Activated CD4-positive, alpha-beta memory T cell treated with anti-CD3 and anti-CD28 coated beads for 36 hours (primary cell): ENCODE measurements at regions of chr6 and their contacts with region 1.

Region 1: DNA sequence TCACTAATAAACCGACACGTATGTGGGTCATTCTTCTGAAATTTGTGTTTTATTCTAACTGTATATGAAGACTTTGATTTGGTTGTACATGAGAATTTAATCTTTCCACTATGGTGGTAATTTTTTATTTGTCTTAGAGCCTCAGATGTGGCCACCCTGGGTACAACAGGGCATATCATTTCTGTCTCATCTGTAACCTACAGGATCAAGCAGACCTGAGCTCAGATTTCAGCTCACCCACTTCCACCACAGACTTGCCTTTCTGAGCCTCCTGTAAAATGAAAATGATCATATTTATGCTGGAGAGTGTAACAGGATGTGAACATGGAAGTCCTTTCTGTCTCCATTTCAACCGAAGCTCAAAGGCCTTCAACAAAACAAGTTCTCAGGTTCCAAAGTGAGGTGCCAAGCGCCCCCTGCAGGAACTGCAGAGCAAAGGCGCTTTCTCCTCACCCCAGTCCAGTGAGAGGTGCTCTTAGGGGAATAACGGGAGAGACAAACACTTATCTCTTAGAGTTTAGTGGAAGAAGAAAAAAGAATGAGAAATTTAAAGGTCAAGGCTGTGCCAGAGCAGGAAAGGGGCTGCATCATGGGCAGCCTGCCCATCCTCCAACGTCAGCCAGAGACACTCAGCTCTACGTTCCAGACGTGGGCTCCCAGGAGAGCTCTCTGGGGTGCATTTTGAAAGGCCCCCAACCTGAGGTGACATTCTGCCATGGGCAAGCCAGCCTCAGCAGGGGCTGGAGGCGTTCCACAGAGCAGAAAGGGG is 23.0 kb upstream of the CD24 start:
- DNase-seq: peak; percentile 76
- H3K4me3 Mint-ChIP-seq: no peak overlapping the region
- H3K27ac Mint-ChIP-seq: no peak overlapping the region
- H3K4me1 Mint-ChIP-seq: peaks cover 5% of the 10 kb centered on the region
- H3K27me3 Mint-ChIP-seq: no peaks in the 10 kb centered on the region

Region 2: GRCh38 chr6:107009499-107009898 is 11.9 kb after region 1 on chr6:
- CTCF ChIA-PET with region 1: interaction called, 12 read pairs
- POLR2A ChIA-PET with region 1: no interaction called
- intact Hi-C with region 1: no loop called
- DNase-seq: no peak
- H3K4me3 Mint-ChIP-seq: no peak overlapping the region
- H3K27ac Mint-ChIP-seq: no peak overlapping the region
- H3K4me1 Mint-ChIP-seq: no peaks in the 10 kb centered on the region
- H3K27me3 Mint-ChIP-seq: peaks cover 5% of the 10 kb centered on the region